ENCODE measurements at regions of chr3 and their contacts with region 1.

Region 1: DNA sequence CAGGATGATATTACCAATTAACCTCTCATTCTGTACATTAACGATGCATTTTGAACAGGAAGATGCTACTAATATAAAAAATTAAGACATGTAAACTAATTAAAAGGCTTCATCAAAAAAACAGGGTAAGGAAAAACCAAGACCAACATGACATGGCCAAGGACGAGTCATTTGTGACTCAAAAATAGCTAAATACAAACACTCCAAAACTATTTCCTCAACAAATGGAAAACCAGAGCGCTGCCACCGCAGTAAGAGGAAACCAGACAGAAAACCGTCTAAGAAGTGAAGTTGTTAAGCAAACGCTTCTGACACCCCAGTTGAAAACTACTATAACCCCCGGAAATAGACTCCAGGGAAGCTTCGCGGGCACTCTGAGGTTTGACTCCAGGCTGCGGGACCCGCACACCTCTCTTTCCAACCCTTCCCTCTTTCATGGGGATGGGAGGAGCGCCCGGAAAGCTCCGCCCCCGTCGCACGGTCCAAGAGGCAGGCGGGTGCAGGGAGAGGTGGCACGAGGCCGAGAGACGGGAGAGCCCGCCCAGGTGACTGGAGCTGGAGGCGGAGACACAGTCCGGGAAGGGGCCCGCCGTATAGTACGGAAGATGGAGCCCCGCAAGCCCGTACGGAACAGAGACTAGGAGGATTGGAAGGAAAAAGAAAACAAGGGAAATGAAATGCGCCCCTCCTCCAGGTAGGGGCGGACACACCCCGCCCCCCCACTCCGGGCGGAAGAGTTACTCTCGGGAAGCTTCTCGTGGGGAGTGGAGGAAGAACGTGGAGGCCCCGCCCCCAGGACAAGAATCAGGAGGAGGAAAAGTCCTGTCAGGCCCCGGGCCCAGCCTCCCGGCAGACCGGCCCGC is 708 bp downstream of the DCAF1 start:
- DNase-seq: peak; percentile 96 to 98 (median 97)
- H3K4me3 ChIP-seq: peak overlapping the region in 3 of 4 donors; percentile 47 to 73 (median 71)
- H3K27ac ChIP-seq: peak overlapping the region; percentile 89 to 99 (median 97)
- H3K4me1 ChIP-seq: peaks cover 4 to 23% of the 10 kb centered on the region in 2 donors
- H3K27me3 ChIP-seq: no peaks in the 10 kb centered on the region
- CTCF ChIP-seq: no peak
- POLR2A ChIP-seq: peak; percentile 71 to 91

Region 2: DNA sequence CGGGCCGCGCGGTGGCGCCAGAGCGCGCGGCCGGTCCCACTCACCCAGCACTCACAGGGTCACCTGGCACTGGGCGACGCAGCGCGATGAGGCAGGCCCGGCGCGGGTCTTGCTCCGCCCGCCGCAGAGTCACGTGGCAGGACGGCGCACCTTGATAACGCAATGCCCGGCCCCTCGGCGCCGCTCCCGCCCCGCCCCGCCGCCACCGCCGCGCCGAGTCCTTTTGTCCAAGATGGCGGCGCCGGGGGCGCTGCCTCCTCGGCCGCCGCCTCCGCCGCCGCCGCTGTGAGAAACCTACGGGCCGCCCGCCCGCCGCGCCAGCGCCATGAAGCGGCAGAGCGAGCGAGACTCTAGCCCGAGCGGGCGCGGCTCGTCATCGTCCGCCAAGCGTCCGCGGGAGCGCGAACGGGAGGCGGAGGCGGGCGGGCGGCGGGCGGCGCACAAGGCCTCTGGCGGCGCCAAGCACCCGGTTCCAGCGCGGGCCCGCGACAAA is 108.0 kb before region 1 on chr3 and contains the start of gene RBM15B:
- intact Hi-C with region 1: loop called in 1 of 2 experiments (anchors 10 kb)
- DNase-seq: peak; percentile 98 to 99 (median 98)
- H3K4me3 ChIP-seq: peak within 1 kb of the TSS; percentile 25 to 99 (median 50)
- H3K27ac ChIP-seq: peak within 1 kb of the TSS; percentile 53 to 97 (median 82)
- H3K4me1 ChIP-seq: peaks cover 14 to 75% of the 10 kb centered on the region in 2 donors
- H3K27me3 ChIP-seq: no peaks in the 10 kb centered on the region
- CTCF ChIP-seq: peak in 4 of 6 experiments; percentile 76 to 95 (median 90)
- POLR2A ChIP-seq: peak; percentile 85 to 90
- total RNA-seq, gene RBM15B: 10.4 to 36.6 (median 27.0) TPM

Region 3: GRCh38 chr3:51538459-51539290 is 39.6 kb after region 1 on chr3 and contains the start of gene RAD54L2:
- intact Hi-C with region 1: loop called in 1 of 2 experiments (anchors 2 kb)
- DNase-seq: peak; percentile 79 to 89 (median 84)
- H3K4me3 ChIP-seq: peak within 1 kb of the TSS; percentile 45 to 98 (median 70)
- H3K27ac ChIP-seq: peak within 1 kb of the TSS; percentile 79 to 94 (median 87)
- H3K4me1 ChIP-seq: peaks cover 9 to 29% of the 10 kb centered on the region in 2 donors
- H3K27me3 ChIP-seq: no peaks in the 10 kb centered on the region
- CTCF ChIP-seq: peak in 3 of 6 experiments; percentile 19 to 38 (median 26)
- POLR2A ChIP-seq: peak; percentile 63 to 83
- total RNA-seq, gene RAD54L2: 11.0 to 42.2 (median 19.4) TPM

Region 4: GRCh38 chr3:51637941-51638471 is 138.9 kb after region 1 on chr3:
- intact Hi-C with region 1: loop called in 1 of 2 experiments (anchors 2 kb)
- DNase-seq: peak in 6 of 7 donors; percentile 40 to 81 (median 58)
- H3K4me3 ChIP-seq: no peak overlapping the region
- H3K27ac ChIP-seq: no peak overlapping the region
- H3K4me1 ChIP-seq: no peaks in the 10 kb centered on the region
- H3K27me3 ChIP-seq: no peaks in the 10 kb centered on the region
- CTCF ChIP-seq: peak; percentile 56 to 94 (median 74)
- POLR2A ChIP-seq: no peak

Region 5: DNA sequence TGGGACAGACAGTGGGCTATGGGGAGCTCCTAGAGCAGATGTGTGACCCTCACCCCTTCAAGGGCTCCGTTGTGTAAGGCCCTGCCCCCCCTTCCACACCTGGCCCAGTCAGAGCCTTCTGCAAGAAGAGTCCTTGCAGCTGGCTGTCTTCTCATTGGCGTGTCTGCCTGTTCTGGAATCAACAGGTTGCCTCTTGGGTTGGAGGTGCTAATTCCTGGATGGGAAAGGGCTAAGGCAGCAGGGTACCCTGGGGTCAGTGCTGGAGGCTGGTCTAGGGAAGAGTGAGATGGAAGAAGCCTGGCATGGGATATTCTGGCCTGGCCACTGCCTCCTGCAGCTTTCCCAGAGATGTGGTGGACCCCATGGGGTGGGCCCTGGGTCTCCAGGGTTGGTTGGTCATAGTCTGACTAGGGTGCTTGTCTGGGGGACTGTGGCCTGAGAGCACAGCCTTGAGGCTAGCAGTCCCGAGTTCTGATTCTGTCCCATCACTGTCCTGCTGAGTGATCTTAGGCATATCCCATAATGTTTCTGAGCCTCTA is 177.1 kb after region 1 on chr3:
- intact Hi-C with region 1: loop called (anchors 2 to 5 kb)
- DNase-seq: peak in 1 of 7 donors; percentile 9
- H3K4me3 ChIP-seq: no peak overlapping the region
- H3K27ac ChIP-seq: no peak overlapping the region
- H3K4me1 ChIP-seq: peaks cover 20 to 42% of the 10 kb centered on the region in 2 donors
- H3K27me3 ChIP-seq: no peaks in the 10 kb centered on the region
- CTCF ChIP-seq: no peak
- POLR2A ChIP-seq: no peak

Region 6: DNA sequence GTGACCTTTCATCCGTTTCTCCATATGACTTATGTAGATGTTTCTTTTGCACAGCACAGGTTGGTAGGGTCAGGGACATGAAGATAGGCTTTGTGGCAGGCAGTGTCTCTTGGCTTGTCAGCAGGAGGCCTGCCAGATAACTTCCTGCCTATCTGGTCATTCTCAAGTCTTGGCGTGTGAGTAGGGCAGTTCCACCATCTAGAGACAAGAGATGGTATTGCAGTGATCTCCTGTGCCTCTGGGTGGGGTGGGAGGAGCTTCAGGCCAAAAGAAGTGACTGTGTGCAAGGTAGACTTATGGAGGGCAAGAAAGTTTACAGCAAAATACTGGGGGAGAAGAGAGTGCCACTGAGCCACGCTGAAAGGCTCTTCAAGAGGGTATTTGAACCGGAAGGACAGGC is 183.0 kb after region 1 on chr3:
- intact Hi-C with region 1: loop called (anchors 2 to 5 kb)
- DNase-seq: peak; percentile 81 to 95 (median 87)
- H3K4me3 ChIP-seq: no peak overlapping the region
- H3K27ac ChIP-seq: peak overlapping the region in 3 of 5 donors; percentile 20 to 59 (median 26)
- H3K4me1 ChIP-seq: peaks cover 20 to 49% of the 10 kb centered on the region in 2 donors
- H3K27me3 ChIP-seq: no peaks in the 10 kb centered on the region
- CTCF ChIP-seq: peak; percentile 77 to 99 (median 96)
- POLR2A ChIP-seq: no peak